ENCODE measurements at regions of chr22 and their contacts with region 1.

Region 1: GRCh38 chr22:43088979-43089717 is at the start of gene TTLL1:
- DNase-seq: peak; percentile 73 to 93 (median 86)
- ATAC-seq: peak; percentile 95
- H3K4me3 ChIP-seq: peak within 1 kb of the TSS; percentile 63
- H3K4me3 Mint-ChIP-seq: peak within 1 kb of the TSS; percentile 92
- H3K27ac ChIP-seq: peak within 1 kb of the TSS; percentile 42 to 58
- H3K27ac Mint-ChIP-seq: peak within 1 kb of the TSS; percentile 70
- H3K4me1 ChIP-seq: peaks cover 31% of the 10 kb centered on the region
- H3K4me1 Mint-ChIP-seq: peaks cover 16% of the 10 kb centered on the region
- H3K27me3 ChIP-seq: no peaks in the 10 kb centered on the region
- H3K27me3 Mint-ChIP-seq: no peaks in the 10 kb centered on the region
- CTCF ChIP-seq: no peak
- total RNA-seq, gene TTLL1: 2.6 to 2.8 TPM

Region 2: DNA sequence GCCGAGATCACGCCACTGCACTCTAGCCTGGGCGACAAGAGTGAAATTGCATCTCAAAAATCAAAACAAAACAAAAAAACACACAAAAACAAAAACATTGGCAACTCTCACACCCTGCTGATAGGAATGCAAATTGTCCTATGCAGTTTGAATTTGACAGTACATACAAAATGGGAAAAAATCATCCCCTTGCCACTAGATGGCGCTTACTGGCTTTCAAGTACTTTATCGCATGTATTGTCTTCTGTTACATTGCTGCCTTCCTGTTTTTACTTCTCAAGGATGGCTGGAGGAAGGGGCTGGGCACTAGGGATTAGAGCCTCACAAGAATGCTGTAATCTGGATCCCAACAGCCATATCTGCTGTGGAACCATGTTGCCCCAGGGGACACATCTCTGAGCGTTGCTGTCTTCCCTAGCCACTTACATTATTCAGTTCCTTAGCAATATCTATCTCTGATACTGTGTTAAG is 309.0 kb before region 1 on chr22:
- CTCF ChIA-PET with region 1: no interaction called
- POLR2A ChIA-PET with region 1: no interaction called
- intact Hi-C with region 1: loop called in 1 of 2 experiments (anchors 2 kb)
- DNase-seq: peak in 9 of 14 experiments; percentile 9 to 82 (median 32)
- ATAC-seq: peak; percentile 62
- H3K4me3 ChIP-seq: no peak overlapping the region
- H3K4me3 Mint-ChIP-seq: no peak overlapping the region
- H3K27ac ChIP-seq: no peak overlapping the region
- H3K27ac Mint-ChIP-seq: no peak overlapping the region
- H3K4me1 ChIP-seq: no peaks in the 10 kb centered on the region
- H3K4me1 Mint-ChIP-seq: no peaks in the 10 kb centered on the region
- H3K27me3 ChIP-seq: no peaks in the 10 kb centered on the region
- H3K27me3 Mint-ChIP-seq: no peaks in the 10 kb centered on the region
- CTCF ChIP-seq: peak; percentile 79

Region 3: GRCh38 chr22:42856865-42857704 is 232.1 kb before region 1 on chr22 and contains the start of gene ARFGAP3:
- CTCF ChIA-PET with region 1: no interaction called
- POLR2A ChIA-PET with region 1: no interaction called
- intact Hi-C with region 1: loop called in 1 of 2 experiments (anchors 2 kb)
- DNase-seq: peak; percentile 85 to 98 (median 94)
- ATAC-seq: peak; percentile 93
- H3K4me3 ChIP-seq: peak within 1 kb of the TSS; percentile 74
- H3K4me3 Mint-ChIP-seq: peak within 1 kb of the TSS; percentile 92
- H3K27ac ChIP-seq: peak within 1 kb of the TSS; percentile 86 to 87
- H3K27ac Mint-ChIP-seq: peak within 1 kb of the TSS; percentile 91
- H3K4me1 ChIP-seq: peaks cover 32% of the 10 kb centered on the region
- H3K4me1 Mint-ChIP-seq: peaks cover 12% of the 10 kb centered on the region
- H3K27me3 ChIP-seq: no peaks in the 10 kb centered on the region
- H3K27me3 Mint-ChIP-seq: no peaks in the 10 kb centered on the region
- CTCF ChIP-seq: no peak
- total RNA-seq, gene ARFGAP3: 19.5 to 21.4 TPM

Region 4: GRCh38 chr22:43014869-43015676 is 74.1 kb before region 1 on chr22 and contains the start of gene PACSIN2:
- CTCF ChIA-PET with region 1: interaction called, 3 read pairs
- POLR2A ChIA-PET with region 1: no interaction called
- intact Hi-C with region 1: loop called in 1 of 2 experiments (anchors 2 kb)
- DNase-seq: peak; percentile 97 to 99 (median 99)
- ATAC-seq: peak; percentile 97
- H3K4me3 ChIP-seq: peak within 1 kb of the TSS; percentile 91
- H3K4me3 Mint-ChIP-seq: peak within 1 kb of the TSS; percentile 99
- H3K27ac ChIP-seq: peak within 1 kb of the TSS; percentile 75
- H3K27ac Mint-ChIP-seq: peak within 1 kb of the TSS; percentile 98
- H3K4me1 ChIP-seq: peaks cover 23% of the 10 kb centered on the region
- H3K4me1 Mint-ChIP-seq: peaks cover 38% of the 10 kb centered on the region
- H3K27me3 ChIP-seq: no peaks in the 10 kb centered on the region
- H3K27me3 Mint-ChIP-seq: no peaks in the 10 kb centered on the region
- CTCF ChIP-seq: no peak
- total RNA-seq, gene PACSIN2: 23.3 to 25.5 TPM

Region 5: GRCh38 chr22:43142880-43143562 is 53.9 kb after region 1 on chr22 and contains the start of gene MCAT:
- CTCF ChIA-PET with region 1: no interaction called
- POLR2A ChIA-PET with region 1: no interaction called
- intact Hi-C with region 1: loop called in 1 of 2 experiments (anchors 1 kb)
- DNase-seq: peak; percentile 64 to 88 (median 73)
- ATAC-seq: peak; percentile 86
- H3K4me3 ChIP-seq: peak within 1 kb of the TSS; percentile 75
- H3K4me3 Mint-ChIP-seq: peak within 1 kb of the TSS; percentile 91
- H3K27ac ChIP-seq: peak within 1 kb of the TSS; percentile 65 to 67
- H3K27ac Mint-ChIP-seq: peak within 1 kb of the TSS; percentile 95
- H3K4me1 ChIP-seq: peaks cover 24% of the 10 kb centered on the region
- H3K4me1 Mint-ChIP-seq: peaks cover 28% of the 10 kb centered on the region
- H3K27me3 ChIP-seq: no peaks in the 10 kb centered on the region
- H3K27me3 Mint-ChIP-seq: no peaks in the 10 kb centered on the region
- CTCF ChIP-seq: no peak
- total RNA-seq, gene MCAT: 16.1 to 18.0 TPM

Region 6: DNA sequence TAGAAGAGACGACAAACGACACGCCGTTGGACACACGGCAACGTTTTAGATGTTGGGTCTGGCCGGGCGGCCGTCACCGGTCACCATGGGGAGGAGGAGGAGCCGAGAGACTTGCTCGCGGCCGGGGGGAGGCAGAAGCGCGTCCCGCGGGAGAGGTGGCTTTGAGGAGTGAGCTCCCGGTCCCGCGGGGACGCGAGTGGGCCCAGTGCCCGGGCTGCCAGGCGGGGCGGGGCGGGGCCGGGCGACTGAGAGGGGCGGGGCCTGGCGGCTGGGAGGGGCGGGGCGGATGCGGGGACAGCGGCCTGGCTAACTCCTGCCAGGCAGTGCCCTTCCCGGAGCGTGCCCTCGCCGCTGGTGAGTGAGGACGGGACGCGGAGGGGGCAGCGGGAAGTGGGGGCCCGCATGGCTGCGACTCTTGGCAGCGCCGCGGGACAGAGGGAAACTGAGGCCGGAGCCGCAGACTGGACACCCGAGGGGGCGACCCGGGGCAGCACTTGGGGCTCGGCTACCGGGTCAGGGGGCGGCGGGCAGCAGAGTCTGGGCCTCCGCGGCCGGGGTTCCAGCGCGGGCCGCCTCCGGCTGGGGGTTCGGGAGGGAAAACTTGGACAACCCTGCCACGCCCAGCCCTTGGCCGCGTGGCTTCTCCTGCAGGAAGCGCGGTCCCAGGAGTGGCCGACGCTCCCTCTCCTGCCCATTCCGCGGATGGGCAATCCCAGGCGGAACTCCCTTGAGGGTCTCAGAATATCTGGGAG is 62.3 kb after region 1 on chr22 and contains the start of gene TSPO:
- CTCF ChIA-PET with region 1: no interaction called
- POLR2A ChIA-PET with region 1: no interaction called
- intact Hi-C with region 1: loop called in 1 of 2 experiments (anchors 2 kb)
- DNase-seq: peak; percentile 31 to 82 (median 56)
- ATAC-seq: peak; percentile 47
- H3K4me3 ChIP-seq: peak within 1 kb of the TSS; percentile 74
- H3K4me3 Mint-ChIP-seq: peak within 1 kb of the TSS; percentile 97
- H3K27ac ChIP-seq: peak within 1 kb of the TSS; percentile 56 to 60
- H3K27ac Mint-ChIP-seq: peak within 1 kb of the TSS; percentile 87
- H3K4me1 ChIP-seq: peaks cover 46% of the 10 kb centered on the region
- H3K4me1 Mint-ChIP-seq: peaks cover 35% of the 10 kb centered on the region
- H3K27me3 ChIP-seq: no peaks in the 10 kb centered on the region
- H3K27me3 Mint-ChIP-seq: no peaks in the 10 kb centered on the region
- CTCF ChIP-seq: no peak
- total RNA-seq, gene TSPO: 43.8 to 45.6 TPM

Region 7: DNA sequence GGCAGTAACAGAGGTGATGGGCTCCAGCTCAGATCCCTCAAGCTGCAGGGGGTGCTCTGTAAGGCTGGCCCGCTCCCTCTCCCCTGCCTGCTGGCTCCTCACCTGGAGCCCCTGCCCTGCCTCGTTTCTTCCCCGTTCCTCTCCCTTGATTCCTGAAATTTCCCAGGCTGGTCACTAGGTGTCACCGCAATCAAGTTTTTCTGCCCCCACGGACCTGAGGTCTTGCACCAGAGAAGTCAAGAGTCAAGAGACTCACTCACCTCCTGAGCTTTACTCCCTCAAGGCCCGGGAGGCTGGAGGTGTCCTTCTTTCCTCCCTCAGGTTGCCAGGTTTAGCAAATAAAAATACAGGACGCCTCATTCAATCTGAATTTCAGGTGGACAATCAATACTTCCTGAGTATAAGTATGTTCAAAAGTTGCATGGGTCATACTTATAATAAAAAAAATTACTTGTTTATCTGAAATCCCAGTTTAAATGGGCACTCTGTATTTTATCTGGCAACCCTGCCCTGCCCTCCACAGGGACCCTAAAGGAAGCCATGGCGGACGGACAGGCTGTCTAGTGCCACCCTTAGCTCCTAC is 184.8 kb after region 1 on chr22:
- CTCF ChIA-PET with region 1: no interaction called
- POLR2A ChIA-PET with region 1: no interaction called
- intact Hi-C with region 1: no loop called
- DNase-seq: peak in 11 of 14 experiments; percentile 8 to 73 (median 15)
- ATAC-seq: no peak
- H3K4me3 ChIP-seq: no peak overlapping the region
- H3K4me3 Mint-ChIP-seq: no peak overlapping the region
- H3K27ac ChIP-seq: no peak overlapping the region
- H3K27ac Mint-ChIP-seq: no peak overlapping the region
- H3K4me1 ChIP-seq: peaks cover 4% of the 10 kb centered on the region
- H3K4me1 Mint-ChIP-seq: no peaks in the 10 kb centered on the region
- H3K27me3 ChIP-seq: no peaks in the 10 kb centered on the region
- H3K27me3 Mint-ChIP-seq: peaks cover 5% of the 10 kb centered on the region
- CTCF ChIP-seq: peak; percentile 49